Naive thymus-derived CD4-positive, alpha-beta T cell (primary cell): ENCODE measurements at regions of chr3 and their contacts with region 1.

Region 1: GRCh38 chr3:16284633-16285032 is 19.6 kb downstream of the OXNAD1 start:
- DNase-seq: no peak
- ATAC-seq: no peak
- H3K4me3 ChIP-seq: no peak overlapping the region
- H3K4me3 Mint-ChIP-seq: peak overlapping the region; percentile 50 to 98 (median 96)
- H3K27ac ChIP-seq: peak overlapping the region; percentile 90
- H3K27ac Mint-ChIP-seq: peak overlapping the region; percentile 92 to 99 (median 97)
- H3K4me1 ChIP-seq: peaks cover 16 to 34% of the 10 kb centered on the region in 2 donors
- H3K4me1 Mint-ChIP-seq: peaks cover 34 to 57% (median 43%) of the 10 kb centered on the region in 7 donors
- H3K27me3 ChIP-seq: no peaks in the 10 kb centered on the region
- H3K27me3 Mint-ChIP-seq: no peaks in the 10 kb centered on the region

Region 2: GRCh38 chr3:16236856-16237393 is 47.7 kb before region 1 on chr3:
- CTCF ChIA-PET with region 1: no interaction called
- POLR2A ChIA-PET with region 1: no interaction called
- intact Hi-C with region 1: no loop called
- DNase-seq: no peak
- ATAC-seq: no peak
- H3K4me3 ChIP-seq: no peak overlapping the region
- H3K4me3 Mint-ChIP-seq: no peak overlapping the region
- H3K27ac ChIP-seq: no peak overlapping the region
- H3K27ac Mint-ChIP-seq: no peak overlapping the region
- H3K4me1 ChIP-seq: no peaks in the 10 kb centered on the region
- H3K4me1 Mint-ChIP-seq: peaks cover 0 to 14% (median 0%) of the 10 kb centered on the region in 7 donors
- H3K27me3 ChIP-seq: no peaks in the 10 kb centered on the region
- H3K27me3 Mint-ChIP-seq: peaks cover 0 to 5% (median 4%) of the 10 kb centered on the region in 5 donors

Region 3: GRCh38 chr3:16270855-16271254 is 13.8 kb before region 1 on chr3:
- CTCF ChIA-PET with region 1: interaction called, 92 read pairs
- POLR2A ChIA-PET with region 1: interaction called, 33 read pairs
- intact Hi-C with region 1: loop called in 1 of 2 experiments (anchors 1 kb)
- DNase-seq: no peak
- ATAC-seq: no peak
- H3K4me3 ChIP-seq: no peak overlapping the region
- H3K4me3 Mint-ChIP-seq: no peak overlapping the region
- H3K27ac ChIP-seq: no peak overlapping the region
- H3K27ac Mint-ChIP-seq: no peak overlapping the region
- H3K4me1 ChIP-seq: peaks cover 7 to 17% of the 10 kb centered on the region in 2 donors
- H3K4me1 Mint-ChIP-seq: peaks cover 5 to 31% (median 26%) of the 10 kb centered on the region in 7 donors
- H3K27me3 ChIP-seq: no peaks in the 10 kb centered on the region
- H3K27me3 Mint-ChIP-seq: no peaks in the 10 kb centered on the region

Region 4: GRCh38 chr3:16349986-16350596 is 65.5 kb after region 1 on chr3:
- CTCF ChIA-PET with region 1: no interaction called
- POLR2A ChIA-PET with region 1: no interaction called
- intact Hi-C with region 1: no loop called
- DNase-seq: no peak
- ATAC-seq: no peak
- H3K4me3 ChIP-seq: no peak overlapping the region
- H3K4me3 Mint-ChIP-seq: peak overlapping the region in 1 of 10 donors; percentile 9
- H3K27ac ChIP-seq: no peak overlapping the region
- H3K27ac Mint-ChIP-seq: peak overlapping the region in 8 of 9 donors; percentile 28 to 78 (median 64)
- H3K4me1 ChIP-seq: peaks cover 0 to 6% of the 10 kb centered on the region in 2 donors
- H3K4me1 Mint-ChIP-seq: peaks cover 22 to 89% (median 72%) of the 10 kb centered on the region in 7 donors
- H3K27me3 ChIP-seq: no peaks in the 10 kb centered on the region
- H3K27me3 Mint-ChIP-seq: no peaks in the 10 kb centered on the region